Calu3 (cell line): ENCODE measurements at regions of chr7 and their contacts with region 1.

Region 1: DNA sequence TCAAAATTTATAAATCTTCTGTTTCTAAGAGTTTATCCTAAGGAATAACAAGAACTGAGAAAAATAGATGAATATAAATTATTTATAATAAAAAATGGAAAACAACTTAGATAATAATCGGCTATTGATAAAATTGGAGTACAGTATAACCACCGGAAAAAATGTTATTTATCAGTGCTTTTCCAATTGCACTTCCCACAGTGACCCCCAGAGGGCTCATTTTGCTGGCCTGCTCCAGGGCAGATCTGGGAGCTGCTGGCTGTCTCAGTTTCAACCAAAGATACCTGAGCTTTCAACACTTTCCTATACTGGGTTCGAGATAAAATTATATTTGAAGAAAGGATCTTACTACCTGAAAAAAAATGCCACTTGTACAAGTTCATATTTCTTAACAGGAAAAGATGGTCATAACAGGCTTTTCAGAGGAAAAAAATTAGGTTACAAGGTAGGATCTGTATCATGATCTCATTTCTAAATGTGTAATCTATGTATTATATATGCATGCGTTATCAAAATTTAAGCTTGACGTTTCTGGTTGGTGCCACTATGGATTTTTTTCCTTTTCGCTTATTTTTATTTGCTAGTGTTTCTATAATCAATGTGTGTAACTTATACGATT is 165.7 kb downstream of the NPSR1 start:
- DNase-seq: peak; percentile 88
- H3K4me3 Mint-ChIP-seq: no peak overlapping the region
- H3K27ac Mint-ChIP-seq: no peak overlapping the region
- H3K4me1 Mint-ChIP-seq: no peaks in the 10 kb centered on the region
- H3K27me3 Mint-ChIP-seq: no peaks in the 10 kb centered on the region
- CTCF ChIP-seq: peak; percentile 97

Region 2: DNA sequence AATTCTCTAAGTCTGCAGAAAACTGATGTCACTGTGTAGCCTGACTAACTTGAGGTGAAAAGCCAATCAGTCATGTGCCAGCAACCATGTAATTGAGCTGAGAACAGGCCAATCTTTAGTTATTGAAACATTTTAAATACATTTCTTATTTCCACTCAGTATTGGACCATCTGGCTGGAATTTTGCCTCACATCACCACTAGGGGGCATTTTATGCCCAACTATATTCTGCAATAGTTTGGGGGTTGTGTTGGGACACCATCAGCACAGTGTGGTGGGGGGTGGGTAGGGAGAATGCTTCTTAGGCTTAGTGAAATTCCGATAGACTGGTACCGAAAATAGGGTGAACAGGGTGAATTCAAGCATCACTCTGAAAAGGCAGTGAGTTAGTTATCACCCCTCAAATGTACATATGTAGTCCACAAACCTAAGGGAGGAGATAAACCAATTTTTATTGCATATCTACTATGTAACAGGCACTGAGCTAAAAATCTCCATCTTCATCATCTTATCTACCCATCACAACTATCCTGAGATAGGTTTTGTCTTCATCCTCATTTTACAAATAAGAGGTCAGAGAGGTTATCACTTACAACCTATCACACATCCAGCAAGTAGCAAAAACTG is 147.9 kb before region 1 on chr7:
- CTCF ChIA-PET with region 1: no interaction called
- intact Hi-C with region 1: loop called (anchors 1 kb)
- DNase-seq: peak; percentile 66
- H3K4me3 Mint-ChIP-seq: no peak overlapping the region
- H3K27ac Mint-ChIP-seq: no peak overlapping the region
- H3K4me1 Mint-ChIP-seq: peaks cover 24% of the 10 kb centered on the region
- H3K27me3 Mint-ChIP-seq: no peaks in the 10 kb centered on the region
- CTCF ChIP-seq: peak; percentile 85

Region 3: DNA sequence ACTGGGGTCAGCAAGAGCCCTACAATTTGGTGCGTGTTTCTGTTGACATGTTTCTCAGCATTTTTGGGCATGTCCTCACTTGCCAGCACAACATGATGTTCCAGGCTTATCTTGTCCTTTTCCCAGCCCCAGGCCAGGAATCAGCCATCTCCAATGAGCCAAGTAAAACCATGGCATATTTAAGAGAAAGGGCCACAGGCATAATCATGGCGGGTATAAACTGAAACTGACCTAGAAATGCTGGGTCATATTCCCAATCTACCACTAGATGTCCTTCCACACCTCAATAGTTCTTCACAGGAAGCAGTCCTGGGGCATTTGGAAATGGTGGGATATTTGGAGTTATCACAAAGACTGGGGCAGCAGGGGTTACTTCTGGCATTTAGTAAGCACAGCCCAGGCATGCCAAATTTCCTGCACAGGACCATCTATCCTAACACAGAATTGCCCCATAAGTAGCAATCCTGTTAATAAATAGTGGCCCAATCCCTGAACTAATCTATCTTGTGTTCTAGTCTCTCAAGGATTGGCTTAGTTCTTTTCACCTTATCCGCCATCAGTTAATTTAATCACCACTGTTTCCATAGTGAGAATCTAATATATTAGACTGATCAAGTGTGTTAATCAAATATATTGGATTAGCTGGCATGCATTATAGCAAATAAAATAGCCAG is 64.2 kb before region 1 on chr7:
- CTCF ChIA-PET with region 1: interaction called, 5 read pairs
- intact Hi-C with region 1: loop called (anchors 2 kb)
- DNase-seq: peak; percentile 53
- H3K4me3 Mint-ChIP-seq: no peak overlapping the region
- H3K27ac Mint-ChIP-seq: no peak overlapping the region
- H3K4me1 Mint-ChIP-seq: peaks cover 40% of the 10 kb centered on the region
- H3K27me3 Mint-ChIP-seq: no peaks in the 10 kb centered on the region
- CTCF ChIP-seq: peak; percentile 82

Region 4: DNA sequence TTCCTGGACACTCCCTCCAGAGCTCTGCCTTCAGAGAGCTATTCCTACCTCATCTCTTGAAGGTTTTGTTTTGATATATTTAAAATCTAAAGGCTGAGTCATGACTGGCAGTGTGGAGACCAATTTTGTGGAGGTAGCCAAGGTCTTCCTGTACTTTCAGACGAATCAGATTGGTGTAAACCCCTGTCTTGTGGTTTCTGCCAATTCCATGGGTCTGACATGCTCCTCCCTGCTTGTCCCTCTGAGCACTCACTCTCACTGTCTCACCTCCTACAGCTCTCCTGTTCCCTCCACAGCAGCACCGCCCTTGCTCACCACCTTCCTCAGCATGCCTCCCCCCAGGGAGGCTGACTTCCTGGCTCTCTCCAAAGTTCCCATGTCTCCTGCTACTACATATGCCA is 14.1 kb after region 1 on chr7:
- CTCF ChIA-PET with region 1: interaction called, 12 read pairs
- intact Hi-C with region 1: no loop called
- DNase-seq: no peak
- H3K4me3 Mint-ChIP-seq: no peak overlapping the region
- H3K27ac Mint-ChIP-seq: no peak overlapping the region
- H3K4me1 Mint-ChIP-seq: peaks cover 31% of the 10 kb centered on the region
- H3K27me3 Mint-ChIP-seq: no peaks in the 10 kb centered on the region
- CTCF ChIP-seq: no peak

Region 5: GRCh38 chr7:34845666-34846361 is 22.1 kb after region 1 on chr7:
- CTCF ChIA-PET with region 1: interaction called, 3 read pairs
- intact Hi-C with region 1: loop called (anchors 1 kb)
- DNase-seq: peak; percentile 50
- H3K4me3 Mint-ChIP-seq: no peak overlapping the region
- H3K27ac Mint-ChIP-seq: peak overlapping the region; percentile 0
- H3K4me1 Mint-ChIP-seq: peaks cover 22% of the 10 kb centered on the region
- H3K27me3 Mint-ChIP-seq: no peaks in the 10 kb centered on the region
- CTCF ChIP-seq: no peak

Region 6: DNA sequence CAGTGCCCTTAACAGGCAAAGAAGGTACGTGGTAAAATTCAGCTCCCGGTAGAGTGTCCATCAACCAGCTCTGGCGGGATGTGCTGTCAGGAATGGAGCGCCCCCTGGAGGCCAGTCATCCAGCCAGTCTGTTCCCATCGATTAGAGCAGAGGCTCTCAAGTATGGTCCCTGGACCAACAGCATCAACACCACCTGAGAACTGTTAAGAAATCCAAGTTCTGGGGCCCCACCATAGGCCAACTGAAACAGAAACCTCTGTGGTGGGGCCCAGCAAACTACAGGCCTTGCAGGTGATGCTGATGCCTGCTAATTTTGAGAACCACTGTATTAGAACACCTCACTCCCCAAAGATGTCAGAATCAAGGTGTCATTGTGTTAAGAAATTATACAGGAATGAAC is 104.3 kb after region 1 on chr7:
- CTCF ChIA-PET with region 1: interaction called, 24 read pairs
- intact Hi-C with region 1: loop called (anchors 1 kb)
- DNase-seq: peak; percentile 91
- H3K4me3 Mint-ChIP-seq: no peak overlapping the region
- H3K27ac Mint-ChIP-seq: no peak overlapping the region
- H3K4me1 Mint-ChIP-seq: peaks cover 8% of the 10 kb centered on the region
- H3K27me3 Mint-ChIP-seq: no peaks in the 10 kb centered on the region
- CTCF ChIP-seq: peak; percentile 91